Common myeloid progenitor, CD34-positive (primary cell): ENCODE measurements at regions of chr1 and their contacts with region 1.

Region 1: DNA sequence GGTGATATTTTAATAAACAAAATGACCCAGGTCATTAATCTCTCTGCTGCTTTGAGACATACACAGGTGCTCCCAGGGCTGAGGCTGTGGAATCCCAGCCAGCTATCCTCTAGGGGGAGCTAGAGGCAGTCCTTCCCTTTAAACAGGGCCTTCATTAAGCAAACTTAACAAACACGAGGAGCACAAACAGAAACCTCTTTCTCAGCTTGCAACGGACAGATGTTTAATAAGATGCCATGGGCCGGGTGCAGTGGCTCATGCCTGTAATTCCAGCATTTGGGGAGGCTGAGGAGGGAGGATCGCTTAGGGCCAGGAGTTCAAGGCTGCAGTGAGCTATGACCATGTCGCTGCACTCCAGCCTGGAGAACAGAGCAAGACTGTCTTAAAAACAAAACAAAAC is 106.7 kb downstream of the HIVEP3 start:
- DNase-seq: peak; percentile 68 to 90 (median 90)
- H3K4me3 ChIP-seq: no peak overlapping the region
- H3K27ac ChIP-seq: no peak overlapping the region
- H3K4me1 ChIP-seq: peaks cover 0 to 11% (median 8%) of the 10 kb centered on the region in 4 experiments
- H3K27me3 ChIP-seq: no peaks in the 10 kb centered on the region

Region 2: DNA sequence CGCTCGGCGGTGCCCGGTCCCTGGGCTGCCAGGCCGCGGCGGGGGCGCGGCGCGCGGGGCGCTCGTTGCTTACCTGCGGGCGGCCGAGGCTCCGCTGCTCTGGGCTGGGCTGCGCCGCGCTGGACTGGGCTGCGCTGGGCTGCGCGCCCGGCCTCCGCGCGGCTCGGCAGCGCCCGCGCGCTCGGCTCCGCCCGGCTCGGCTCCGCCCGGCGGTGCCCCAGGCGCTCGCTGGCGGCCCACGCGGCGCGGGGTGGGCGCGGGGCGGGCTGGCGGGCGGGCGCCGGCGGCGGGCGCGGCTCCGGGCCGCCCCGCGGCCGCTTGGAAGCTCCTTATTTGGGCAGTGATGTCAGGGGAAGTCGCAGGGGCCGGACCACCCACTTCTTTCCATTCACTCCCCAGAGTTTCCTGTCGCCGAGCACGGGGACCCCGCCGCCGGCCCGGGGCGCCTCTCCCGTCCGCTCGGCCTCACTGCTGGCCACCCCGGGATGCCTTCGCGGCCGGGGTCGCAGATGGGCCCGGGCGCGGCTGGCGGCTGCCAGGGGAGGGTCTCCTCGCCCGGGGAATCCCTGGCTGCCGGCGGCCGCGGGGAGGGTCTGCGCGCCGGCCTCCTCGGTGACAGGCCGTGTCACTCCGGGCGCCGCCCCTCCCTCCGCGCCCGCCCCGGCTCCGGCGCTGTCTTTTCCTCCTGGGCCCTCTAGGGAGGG is 149.8 kb before region 1 on chr1:
- CTCF ChIA-PET with region 1: no interaction called
- POLR2A ChIA-PET with region 1: no interaction called
- DNase-seq: peak; percentile 79 to 92 (median 89)
- H3K4me3 ChIP-seq: peak overlapping the region; percentile 3 to 80 (median 62)
- H3K27ac ChIP-seq: peak overlapping the region in 1 of 2 experiments; percentile 45
- H3K4me1 ChIP-seq: peaks cover 1 to 35% (median 29%) of the 10 kb centered on the region in 4 experiments
- H3K27me3 ChIP-seq: peaks cover 0 to 6% (median 0%) of the 10 kb centered on the region in 5 experiments

Region 3: DNA sequence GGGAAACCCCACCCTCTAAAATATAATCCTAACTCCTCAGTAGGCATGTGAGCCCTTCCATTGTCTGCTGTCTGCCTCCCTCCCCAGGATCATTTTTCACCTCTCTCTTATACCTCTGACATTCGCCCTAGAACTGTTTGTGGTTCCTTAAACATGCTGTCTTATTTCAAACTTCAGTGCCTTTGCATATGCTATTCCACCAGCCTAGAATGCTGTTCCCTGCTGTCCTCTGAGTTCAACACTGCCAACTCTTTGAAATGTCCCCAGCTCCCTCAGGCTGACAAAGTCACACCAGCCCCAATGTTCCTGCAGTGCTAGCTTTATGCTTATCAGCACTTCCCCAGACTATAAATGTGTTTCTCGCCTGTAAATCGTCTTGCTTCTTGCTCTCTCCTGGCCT is 12.8 kb before region 1 on chr1:
- CTCF ChIA-PET with region 1: no interaction called
- POLR2A ChIA-PET with region 1: no interaction called
- DNase-seq: peak in 1 of 3 donors; percentile 41
- H3K4me3 ChIP-seq: no peak overlapping the region
- H3K27ac ChIP-seq: no peak overlapping the region
- H3K4me1 ChIP-seq: peaks cover 26 to 46% (median 39%) of the 10 kb centered on the region in 4 experiments
- H3K27me3 ChIP-seq: no peaks in the 10 kb centered on the region

Region 4: GRCh38 chr1:41917835-41918449 is 105.9 kb after region 1 on chr1:
- CTCF ChIA-PET with region 1: interaction called, 22 read pairs
- POLR2A ChIA-PET with region 1: no interaction called
- DNase-seq: peak; percentile 23 to 65 (median 46)
- H3K4me3 ChIP-seq: peak overlapping the region; percentile 61 to 92 (median 73)
- H3K27ac ChIP-seq: no peak overlapping the region
- H3K4me1 ChIP-seq: peaks cover 20 to 60% (median 44%) of the 10 kb centered on the region in 4 experiments
- H3K27me3 ChIP-seq: no peaks in the 10 kb centered on the region